ENCODE measurements at regions of chr10 and their contacts with region 1.

Region 1: GRCh38 chr10:122267849-122268737 is 3.0 kb upstream of the BTBD16 start:
- DNase-seq: peak; percentile 61
- H3K4me3 Mint-ChIP-seq: no peak overlapping the region
- H3K27ac Mint-ChIP-seq: no peak overlapping the region
- H3K4me1 Mint-ChIP-seq: peaks cover 42% of the 10 kb centered on the region
- H3K27me3 Mint-ChIP-seq: no peaks in the 10 kb centered on the region
- CTCF ChIP-seq: peak; percentile 80

Region 2: DNA sequence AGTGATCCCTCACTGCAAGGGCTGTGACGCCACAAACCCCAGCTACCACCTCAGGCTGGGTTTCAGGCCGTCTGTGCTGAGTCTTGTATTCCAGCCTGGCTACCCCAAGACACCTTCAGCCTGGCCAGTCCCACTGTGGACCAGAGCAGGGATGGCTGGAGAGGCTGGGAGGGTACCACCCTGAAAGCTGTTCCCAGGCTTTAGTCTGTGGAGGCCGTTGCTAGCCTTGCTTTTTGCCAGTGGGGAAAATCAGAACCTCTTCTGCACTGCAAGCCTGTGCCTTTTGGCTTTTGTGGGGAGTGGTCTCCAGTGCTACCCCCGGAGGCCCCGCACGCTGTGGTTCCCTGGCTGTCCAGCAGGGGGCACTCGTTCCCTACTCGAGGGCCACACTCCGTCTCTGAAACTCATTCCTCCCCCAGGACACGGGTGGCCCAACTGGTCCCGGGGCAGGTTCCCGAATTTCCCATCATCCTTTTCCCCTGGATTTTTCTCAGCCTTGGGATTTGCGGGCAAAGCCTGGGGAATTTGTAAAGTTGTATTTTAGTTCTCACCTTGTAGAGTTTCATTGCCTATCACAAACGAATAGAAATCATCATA is 125.4 kb before region 1 on chr10:
- CTCF ChIA-PET with region 1: no interaction called
- intact Hi-C with region 1: loop called (anchors 10 kb)
- DNase-seq: peak; percentile 41
- H3K4me3 Mint-ChIP-seq: no peak overlapping the region
- H3K27ac Mint-ChIP-seq: peak overlapping the region; percentile 63
- H3K4me1 Mint-ChIP-seq: peaks cover 34% of the 10 kb centered on the region
- H3K27me3 Mint-ChIP-seq: no peaks in the 10 kb centered on the region
- CTCF ChIP-seq: peak; percentile 89

Measured in Calu3 (cell line).